ENCODE measurements at regions of chr2 and their contacts with region 1.

Region 1: GRCh38 chr2:226835796-226836547 is at the start of gene RHBDD1:
- DNase-seq: peak; percentile 94
- ATAC-seq: peak; percentile 91
- H3K4me3 Mint-ChIP-seq: peak within 1 kb of the TSS; percentile 91
- H3K27ac Mint-ChIP-seq: peak within 1 kb of the TSS; percentile 98
- H3K4me1 Mint-ChIP-seq: peaks cover 44% of the 10 kb centered on the region
- H3K27me3 Mint-ChIP-seq: no peaks in the 10 kb centered on the region
- total RNA-seq, gene RHBDD1: 33.1 to 44.9 TPM

Region 2: GRCh38 chr2:226772389-226773179 is 63.4 kb before region 1 on chr2:
- POLR2A ChIA-PET with region 1: interaction called, 25 read pairs
- DNase-seq: no peak
- ATAC-seq: peak; percentile 83
- H3K4me3 Mint-ChIP-seq: peak overlapping the region; percentile 76
- H3K27ac Mint-ChIP-seq: peak overlapping the region; percentile 78
- H3K4me1 Mint-ChIP-seq: peaks cover 29% of the 10 kb centered on the region
- H3K27me3 Mint-ChIP-seq: no peaks in the 10 kb centered on the region

Region 3: DNA sequence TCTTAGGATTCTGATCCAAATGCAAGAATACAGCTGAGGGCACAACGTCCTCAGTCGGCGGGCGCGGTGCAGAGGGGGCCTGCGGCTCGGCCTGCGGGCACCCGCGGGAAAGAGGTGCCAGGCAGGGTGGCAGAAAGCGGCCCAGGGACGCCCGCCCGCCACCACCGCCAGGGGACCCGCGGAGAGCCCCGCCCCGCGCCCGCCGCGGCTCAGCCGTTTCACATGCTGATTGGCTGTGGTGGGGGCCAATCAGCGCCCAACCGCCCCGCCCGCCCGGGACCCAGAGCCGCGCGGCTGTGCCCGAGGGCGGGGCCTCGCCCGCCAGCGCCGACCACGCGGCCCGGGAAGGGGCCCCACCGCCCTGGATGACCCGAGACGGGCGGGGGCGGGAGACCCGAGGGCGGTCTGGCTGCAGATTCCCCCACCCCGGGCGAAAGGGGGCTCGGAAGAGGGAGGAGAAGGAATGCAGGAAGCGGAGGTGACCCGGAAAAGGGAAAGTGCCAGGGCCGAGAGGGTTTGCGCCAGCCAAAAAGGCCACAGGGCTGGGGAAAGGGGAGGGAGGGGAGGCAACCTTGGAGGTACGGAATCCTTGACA is 44.4 kb before region 1 on chr2:
- POLR2A ChIA-PET with region 1: interaction called, 15 read pairs
- DNase-seq: peak; percentile 96
- ATAC-seq: peak; percentile 94
- H3K4me3 Mint-ChIP-seq: peak overlapping the region; percentile 78
- H3K27ac Mint-ChIP-seq: peak overlapping the region; percentile 99
- H3K4me1 Mint-ChIP-seq: peaks cover 57% of the 10 kb centered on the region
- H3K27me3 Mint-ChIP-seq: no peaks in the 10 kb centered on the region

Region 4: DNA sequence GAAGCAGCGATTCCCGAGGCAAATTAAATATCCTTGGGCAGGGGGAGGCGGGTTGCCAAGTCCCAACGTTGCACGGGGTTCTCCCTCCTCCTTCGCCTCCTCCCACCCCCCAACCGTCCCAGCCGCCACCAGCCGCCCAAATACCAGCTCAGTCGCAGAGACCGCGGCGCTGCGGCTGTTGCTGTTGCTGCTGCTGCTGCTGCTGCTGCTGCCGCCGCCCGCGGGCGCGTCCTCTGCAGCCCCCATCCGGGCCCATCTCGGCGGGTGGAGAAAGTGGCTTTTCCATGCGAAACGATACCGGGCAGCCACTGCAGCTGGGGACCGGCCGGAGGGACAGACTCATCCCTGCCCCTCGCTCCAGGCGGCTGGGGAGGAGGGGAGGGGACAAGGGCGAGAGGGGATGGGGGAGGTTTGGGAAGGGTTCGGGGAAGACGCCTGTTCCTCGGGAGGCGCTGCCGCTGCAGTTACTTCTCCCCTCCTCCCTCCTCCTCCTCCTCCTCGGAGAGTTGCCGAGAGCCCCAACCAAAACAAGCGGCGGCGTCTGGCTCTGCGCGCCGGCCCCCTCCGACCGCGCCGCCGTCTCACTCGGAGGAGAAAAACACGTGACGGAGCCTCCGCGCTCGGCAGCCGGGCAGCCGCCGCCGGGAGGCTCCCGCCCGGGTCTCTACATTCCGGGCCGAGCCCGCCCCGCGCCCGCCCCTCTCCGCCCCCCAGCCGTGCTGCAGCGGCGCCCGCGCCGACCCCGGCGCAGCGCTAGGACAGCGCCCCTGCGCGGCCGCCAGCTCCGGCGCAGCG is 36.6 kb before region 1 on chr2 and contains the start of gene IRS1:
- POLR2A ChIA-PET with region 1: interaction called, 30 read pairs
- DNase-seq: peak; percentile 79
- ATAC-seq: peak; percentile 53
- H3K4me3 Mint-ChIP-seq: peak within 1 kb of the TSS; percentile 89
- H3K27ac Mint-ChIP-seq: peak within 1 kb of the TSS; percentile 84
- H3K4me1 Mint-ChIP-seq: peaks cover 26% of the 10 kb centered on the region
- H3K27me3 Mint-ChIP-seq: peaks cover 5% of the 10 kb centered on the region
- total RNA-seq, gene IRS1: 6.5 to 8.0 TPM

Region 5: DNA sequence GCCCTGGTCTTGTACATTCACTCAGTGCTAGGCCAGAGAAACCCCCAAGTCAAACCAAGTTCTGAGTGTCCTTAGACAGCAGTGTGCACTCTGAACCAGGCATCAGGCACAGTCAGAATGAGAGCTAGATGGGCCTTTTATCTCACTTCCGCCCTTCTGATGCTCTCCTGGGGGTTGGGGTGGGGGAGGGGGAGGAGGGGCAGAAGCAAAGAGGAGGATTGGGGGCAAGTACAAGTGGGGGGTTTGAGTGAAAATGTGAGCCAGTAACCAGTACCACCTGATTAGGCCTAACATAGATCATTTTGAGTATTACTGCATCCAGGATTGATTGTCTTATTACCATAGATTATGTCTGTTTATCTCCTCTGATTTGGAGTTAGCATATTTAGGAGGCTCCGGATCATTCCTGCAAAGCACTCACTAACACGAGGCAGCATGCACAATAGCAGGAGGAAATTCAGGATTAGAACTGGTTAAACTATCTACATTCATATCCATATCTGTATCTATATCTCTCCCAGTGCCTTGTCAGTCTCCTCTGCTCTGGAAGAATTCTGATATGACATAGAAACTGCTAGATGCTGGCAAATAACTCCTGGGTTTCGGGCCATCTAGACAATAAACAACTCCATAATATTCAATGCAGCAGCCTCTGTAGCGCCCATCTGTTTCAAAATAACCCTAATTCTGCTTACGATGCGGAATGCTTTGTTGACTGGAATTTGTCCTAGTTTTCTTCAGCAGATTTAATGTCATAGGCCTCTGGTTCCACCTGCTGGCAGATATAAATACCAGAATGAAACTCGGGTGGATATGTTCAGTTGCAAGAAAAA is 149.0 kb after region 1 on chr2:
- POLR2A ChIA-PET with region 1: interaction called, 15 read pairs
- DNase-seq: no peak
- ATAC-seq: peak; percentile 96
- H3K4me3 Mint-ChIP-seq: no peak overlapping the region
- H3K27ac Mint-ChIP-seq: peak overlapping the region; percentile 82
- H3K4me1 Mint-ChIP-seq: peaks cover 28% of the 10 kb centered on the region
- H3K27me3 Mint-ChIP-seq: no peaks in the 10 kb centered on the region

Region 6: DNA sequence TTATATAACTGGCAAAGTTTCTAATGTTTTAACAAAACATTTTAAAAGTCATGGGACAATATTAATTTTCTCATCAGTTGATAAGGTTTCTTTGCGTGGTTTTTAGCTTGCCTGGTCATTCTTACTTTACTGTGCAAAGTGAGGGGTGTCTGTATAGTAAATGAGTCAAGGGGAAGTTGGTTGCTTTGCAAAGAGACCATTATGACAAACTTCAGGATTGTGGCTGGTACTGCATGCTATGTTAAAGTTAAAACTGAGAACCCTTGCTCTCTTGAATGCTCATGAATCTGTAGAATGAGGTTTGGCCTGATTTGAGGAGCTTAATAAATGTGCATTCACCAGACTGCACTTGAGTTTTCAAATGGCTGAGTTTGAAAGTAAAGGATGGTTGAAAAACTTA is 281.1 kb after region 1 on chr2:
- POLR2A ChIA-PET with region 1: no interaction called
- DNase-seq: no peak
- ATAC-seq: no peak
- H3K4me3 Mint-ChIP-seq: no peak overlapping the region
- H3K27ac Mint-ChIP-seq: no peak overlapping the region
- H3K4me1 Mint-ChIP-seq: peaks cover 5% of the 10 kb centered on the region
- H3K27me3 Mint-ChIP-seq: peaks cover 18% of the 10 kb centered on the region